ENCODE measurements at regions of chr3 and their contacts with region 1.

Region 1: DNA sequence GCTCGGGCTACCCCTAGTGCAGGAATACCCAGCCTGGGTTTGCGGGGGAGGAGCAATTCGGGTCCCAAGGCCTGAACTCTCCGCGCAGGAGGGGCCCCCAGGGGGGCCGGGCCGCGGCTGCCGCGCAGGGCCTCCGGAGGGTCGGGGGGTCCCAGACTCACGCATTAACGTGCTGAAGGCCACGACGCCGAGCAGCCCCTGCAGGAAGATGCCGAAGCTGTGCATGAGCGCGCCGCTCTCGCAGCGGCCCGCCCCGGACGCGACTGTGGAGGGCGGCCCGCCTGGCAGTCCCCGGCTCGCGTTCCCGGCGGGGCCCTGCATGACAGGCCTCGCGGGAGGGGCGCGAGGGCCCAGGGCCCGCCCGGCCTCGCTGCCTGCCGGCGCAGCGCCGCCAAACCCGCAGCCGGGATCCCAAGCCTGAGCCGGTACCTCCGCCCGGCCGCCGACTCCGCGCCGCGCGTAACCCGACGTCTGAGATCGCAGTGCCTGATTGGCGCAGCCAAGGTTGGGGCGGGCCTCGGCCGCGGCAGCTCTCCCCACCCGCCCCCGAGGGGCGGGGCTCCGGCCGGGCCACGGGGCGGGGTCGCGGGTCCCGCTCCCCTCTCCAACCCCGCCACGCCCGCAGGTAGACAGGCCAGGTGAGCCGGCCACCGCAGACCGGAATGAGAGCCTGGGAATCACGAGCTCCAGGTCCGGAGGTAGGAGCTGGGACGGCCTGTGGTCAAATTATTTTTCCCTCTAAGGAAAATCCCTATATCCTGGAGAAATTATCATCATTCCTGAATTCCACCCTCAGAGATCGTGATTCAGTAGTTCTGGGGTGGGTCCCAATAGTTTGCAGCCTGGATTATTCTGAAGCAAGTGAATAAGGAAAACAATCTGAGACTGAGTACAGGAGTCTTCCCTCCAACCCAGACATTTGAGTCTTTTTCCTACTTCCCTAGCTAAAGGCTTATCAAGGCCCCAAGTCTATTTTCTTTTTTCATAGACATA is at the start of gene STIMATE:
- DNase-seq: peak; percentile 87
- H3K4me3 Mint-ChIP-seq: peak within 1 kb of the TSS; percentile 97
- H3K27ac Mint-ChIP-seq: peak within 1 kb of the TSS; percentile 77
- H3K4me1 Mint-ChIP-seq: peaks cover 49% of the 10 kb centered on the region
- H3K27me3 Mint-ChIP-seq: no peaks in the 10 kb centered on the region
- total RNA-seq, gene STIMATE: 19.8 and 20.1 TPM in 2 replicates

Region 2: DNA sequence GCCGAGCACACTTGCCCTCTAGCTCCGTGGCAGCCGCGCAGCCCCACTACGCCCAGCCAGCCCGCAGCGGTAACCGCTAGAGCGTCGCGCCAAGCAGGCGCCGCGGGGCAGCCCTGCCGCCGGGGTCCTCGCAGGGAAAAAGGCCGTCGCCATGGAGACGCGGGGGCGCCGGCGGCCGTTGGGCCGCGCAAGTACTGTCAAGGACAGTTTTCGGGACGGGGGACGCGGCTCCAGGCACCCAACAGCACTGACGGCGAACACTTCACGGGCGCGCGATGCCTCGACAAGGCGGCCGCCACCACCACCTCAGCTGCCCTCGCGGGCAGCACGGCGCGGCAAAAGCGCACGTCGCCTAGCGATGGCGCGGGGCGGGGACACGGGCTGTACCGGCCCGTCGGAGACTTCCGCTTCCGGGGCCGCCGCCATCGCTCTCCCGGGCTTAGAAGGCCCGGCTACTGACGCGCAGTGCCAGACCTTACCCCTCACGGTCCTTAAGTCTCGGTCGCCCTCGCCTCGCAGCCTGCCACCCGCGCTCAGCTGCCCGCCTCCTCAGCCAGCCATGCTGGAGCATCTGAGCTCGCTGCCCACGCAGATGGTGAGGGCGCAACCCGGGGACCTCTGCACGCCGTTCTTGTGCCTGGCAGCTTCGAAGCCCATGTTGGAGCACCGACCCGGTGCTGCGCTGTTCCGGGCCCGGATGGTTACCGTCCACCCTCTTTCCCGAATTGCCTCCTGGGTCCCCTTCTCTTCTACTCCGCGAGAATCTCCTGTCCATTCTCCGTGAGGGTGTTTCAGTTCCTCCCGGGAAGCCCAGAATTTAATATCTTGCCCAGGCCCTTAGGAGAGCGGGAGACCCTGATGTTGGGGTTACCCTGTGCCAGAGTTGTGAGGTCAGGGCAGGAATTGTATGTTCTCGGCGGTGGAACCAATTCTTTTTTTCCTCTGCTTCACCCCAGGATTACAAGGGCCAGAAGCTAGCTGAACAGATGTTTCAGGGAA is 191.4 kb before region 1 on chr3 and contains the starts of genes GLT8D1 and SPCS1:
- intact Hi-C with region 1: loop called (anchors 1 kb)
- DNase-seq: peak; percentile 82
- H3K4me3 Mint-ChIP-seq: peak within 1 kb of the TSS; percentile 99
- H3K27ac Mint-ChIP-seq: peak within 1 kb of the TSS; percentile 94
- H3K4me1 Mint-ChIP-seq: peaks cover 33% of the 10 kb centered on the region
- H3K27me3 Mint-ChIP-seq: no peaks in the 10 kb centered on the region
- total RNA-seq, gene GLT8D1: 33.9 and 40.6 TPM in 2 replicates
- total RNA-seq, gene SPCS1: 122 and 132 TPM in 2 replicates

Region 3: DNA sequence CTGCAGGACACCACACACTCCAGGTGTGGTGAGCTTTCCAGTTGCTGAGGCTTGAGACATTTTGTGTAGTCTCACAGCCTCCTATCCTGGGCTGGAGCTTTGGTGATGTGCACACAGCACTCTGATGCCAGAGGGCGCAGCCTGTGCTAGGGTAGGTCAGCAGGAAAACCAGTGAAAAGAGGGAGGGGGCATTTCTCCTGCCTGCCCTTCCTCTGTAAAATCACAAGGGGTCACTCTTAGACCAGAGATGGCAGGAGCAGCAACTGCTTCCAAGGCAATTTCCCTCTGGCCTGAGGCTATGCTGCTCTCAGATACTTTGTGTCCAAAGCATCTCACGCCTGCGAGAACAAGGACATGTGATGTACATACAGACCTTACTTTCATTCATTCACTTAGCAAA is 46.1 kb before region 1 on chr3:
- intact Hi-C with region 1: loop called (anchors 5 kb)
- DNase-seq: no peak
- H3K4me3 Mint-ChIP-seq: no peak overlapping the region
- H3K27ac Mint-ChIP-seq: no peak overlapping the region
- H3K4me1 Mint-ChIP-seq: no peaks in the 10 kb centered on the region
- H3K27me3 Mint-ChIP-seq: no peaks in the 10 kb centered on the region

Region 4: GRCh38 chr3:52881871-52882270 is 15.6 kb before region 1 on chr3:
- intact Hi-C with region 1: no loop called
- DNase-seq: no peak
- H3K4me3 Mint-ChIP-seq: no peak overlapping the region
- H3K27ac Mint-ChIP-seq: no peak overlapping the region
- H3K4me1 Mint-ChIP-seq: peaks cover 6% of the 10 kb centered on the region
- H3K27me3 Mint-ChIP-seq: no peaks in the 10 kb centered on the region

Region 5: GRCh38 chr3:52934630-52935530 is 37.5 kb after region 1 on chr3:
- intact Hi-C with region 1: loop called (anchors 2 kb)
- DNase-seq: peak; percentile 16
- H3K4me3 Mint-ChIP-seq: no peak overlapping the region
- H3K27ac Mint-ChIP-seq: peak overlapping the region; percentile 35
- H3K4me1 Mint-ChIP-seq: peaks cover 9% of the 10 kb centered on the region
- H3K27me3 Mint-ChIP-seq: no peaks in the 10 kb centered on the region

Region 6: GRCh38 chr3:53255775-53256703 is 358.6 kb after region 1 on chr3 and contains the start of gene TKT:
- intact Hi-C with region 1: loop called (anchors 2 kb)
- DNase-seq: peak; percentile 79
- H3K4me3 Mint-ChIP-seq: peak within 1 kb of the TSS; percentile 95
- H3K27ac Mint-ChIP-seq: peak within 1 kb of the TSS; percentile 90
- H3K4me1 Mint-ChIP-seq: peaks cover 36% of the 10 kb centered on the region
- H3K27me3 Mint-ChIP-seq: peaks cover 8% of the 10 kb centered on the region
- total RNA-seq, gene TKT: 332 and 351 TPM in 2 replicates